ENCODE measurements at regions of chr4 and their contacts with region 1.

Region 1: DNA sequence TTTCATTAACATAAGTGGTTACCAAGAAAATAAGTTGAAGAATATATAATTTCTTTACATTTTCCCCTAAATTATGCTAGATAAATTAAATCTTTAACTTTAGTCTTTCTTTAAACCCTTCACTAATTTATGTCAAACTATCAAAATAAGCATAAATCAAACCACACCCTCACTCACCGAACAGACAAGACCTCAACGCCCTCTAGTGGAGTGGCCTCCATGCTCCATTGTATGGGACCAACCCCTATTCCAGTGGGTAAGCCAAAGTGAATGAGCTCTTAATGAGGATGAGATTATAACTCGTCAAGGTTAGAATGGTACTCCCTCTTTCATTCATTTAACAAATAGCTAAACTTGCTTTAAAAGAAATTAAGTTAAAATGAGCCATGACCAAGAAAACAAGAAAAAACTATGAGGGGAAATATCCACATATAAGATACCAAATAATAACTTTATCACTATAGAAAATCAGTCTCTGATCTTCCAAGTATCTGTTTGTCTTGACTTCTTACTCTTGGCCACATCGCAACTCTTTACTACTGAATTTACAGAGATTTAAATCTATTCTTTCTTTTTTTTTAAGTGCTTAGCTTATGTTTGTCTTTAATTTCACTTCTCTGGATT is 15.6 kb upstream of the BBS12 start:
- DNase-seq: peak; percentile 89
- ATAC-seq: peak; percentile 90
- H3K4me3 Mint-ChIP-seq: peak overlapping the region; percentile 26
- H3K27ac Mint-ChIP-seq: peak overlapping the region; percentile 72
- H3K4me1 Mint-ChIP-seq: peaks cover 43% of the 10 kb centered on the region
- H3K27me3 Mint-ChIP-seq: peaks cover 2% of the 10 kb centered on the region

Region 2: GRCh38 chr4:121950212-121950679 is 766.7 kb before region 1 on chr4:
- CTCF ChIA-PET with region 1: no interaction called
- POLR2A ChIA-PET with region 1: no interaction called
- intact Hi-C with region 1: loop called in 1 of 2 experiments (anchors 2 kb)
- DNase-seq: peak; percentile 94
- ATAC-seq: peak; percentile 87
- H3K4me3 Mint-ChIP-seq: peak overlapping the region; percentile 77
- H3K27ac Mint-ChIP-seq: no peak overlapping the region
- H3K4me1 Mint-ChIP-seq: peaks cover 4% of the 10 kb centered on the region
- H3K27me3 Mint-ChIP-seq: peaks cover 44% of the 10 kb centered on the region

Region 3: DNA sequence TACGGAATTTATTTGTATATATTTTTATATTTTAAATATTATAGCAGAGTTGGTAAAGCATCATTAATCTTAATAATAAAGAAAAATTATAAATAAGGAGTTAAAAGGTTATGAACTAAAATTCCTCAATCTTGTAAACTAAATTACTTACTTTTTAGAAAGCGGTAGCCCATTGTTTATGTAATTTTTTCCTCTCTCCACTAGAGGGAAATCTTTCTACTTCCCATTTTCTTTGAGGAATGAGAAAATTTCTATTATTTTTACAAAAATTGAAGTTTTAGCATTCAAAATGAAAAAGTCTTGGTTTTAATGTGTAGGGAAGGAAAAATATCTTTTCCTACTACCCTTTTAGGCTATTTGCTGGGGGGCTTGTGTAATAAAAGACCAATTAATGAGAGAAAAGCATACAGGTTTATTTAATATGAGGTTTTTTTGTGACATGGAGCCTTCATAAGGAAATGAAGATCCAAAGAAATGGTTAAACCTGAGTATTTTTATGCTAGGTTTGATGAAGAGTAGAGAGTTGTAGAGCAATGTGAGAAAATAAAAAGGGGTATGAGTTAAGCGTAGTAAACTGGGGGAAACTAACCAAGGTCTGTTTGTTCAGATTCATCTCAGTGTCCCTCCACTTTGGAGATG is 406.8 kb before region 1 on chr4:
- CTCF ChIA-PET with region 1: no interaction called
- POLR2A ChIA-PET with region 1: no interaction called
- intact Hi-C with region 1: loop called in 1 of 2 experiments (anchors 10 kb)
- DNase-seq: no peak
- ATAC-seq: no peak
- H3K4me3 Mint-ChIP-seq: no peak overlapping the region
- H3K27ac Mint-ChIP-seq: peak overlapping the region; percentile 51
- H3K4me1 Mint-ChIP-seq: peaks cover 2% of the 10 kb centered on the region
- H3K27me3 Mint-ChIP-seq: no peaks in the 10 kb centered on the region

Region 4: DNA sequence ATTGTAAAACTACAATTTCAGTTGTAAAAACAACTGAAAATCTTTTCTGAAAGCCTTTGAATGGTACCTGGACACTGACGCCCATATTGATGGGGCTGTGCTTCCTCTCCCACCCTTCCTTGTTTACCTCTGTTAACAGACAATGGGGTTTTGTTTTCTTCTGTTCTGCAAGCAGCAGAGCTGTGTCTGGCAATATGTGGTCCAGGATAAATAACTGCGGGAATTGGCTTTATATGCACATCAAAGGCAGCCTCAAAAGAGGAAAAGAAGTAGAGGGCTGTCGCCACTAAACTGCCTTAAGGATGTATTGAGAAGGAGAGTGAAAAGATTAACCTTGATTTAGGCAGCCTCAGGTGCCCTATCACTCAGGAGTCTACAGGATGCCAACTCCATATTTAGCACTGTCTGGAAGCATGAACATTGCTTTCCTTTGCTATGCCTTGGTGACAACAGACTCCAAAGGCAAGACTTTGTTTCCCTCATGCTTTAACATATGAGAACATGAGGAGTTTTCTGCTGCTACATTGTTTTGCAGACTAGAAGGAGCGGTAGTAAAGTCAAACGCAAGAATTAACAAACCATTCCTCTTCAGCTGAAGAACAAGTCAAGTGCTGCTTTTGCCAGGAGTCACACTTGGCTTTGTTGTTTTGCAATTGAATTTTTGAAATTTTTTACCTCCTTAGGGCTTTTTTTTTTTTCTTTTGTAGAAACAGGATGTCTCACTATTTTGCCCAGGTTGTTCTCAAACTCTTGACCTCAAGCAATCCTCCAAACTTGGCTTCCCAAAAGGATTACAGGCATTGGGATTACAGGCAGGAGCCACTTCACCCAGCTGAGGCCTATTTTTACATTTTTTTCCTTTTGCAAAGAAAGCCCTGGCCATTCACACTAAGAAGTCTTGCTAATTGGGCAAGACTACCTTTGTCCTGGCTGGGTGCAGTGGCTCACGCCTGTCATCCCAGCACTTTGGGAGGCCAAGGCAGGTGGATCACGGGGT is 99.0 kb before region 1 on chr4:
- CTCF ChIA-PET with region 1: interaction called, 13 read pairs
- POLR2A ChIA-PET with region 1: no interaction called
- intact Hi-C with region 1: loop called in 1 of 2 experiments (anchors 1 kb)
- DNase-seq: no peak
- ATAC-seq: no peak
- H3K4me3 Mint-ChIP-seq: peak overlapping the region; percentile 80
- H3K27ac Mint-ChIP-seq: peak overlapping the region; percentile 87
- H3K4me1 Mint-ChIP-seq: peaks cover 62% of the 10 kb centered on the region
- H3K27me3 Mint-ChIP-seq: no peaks in the 10 kb centered on the region

Region 5: GRCh38 chr4:122658818-122659295 is 58.1 kb before region 1 on chr4:
- CTCF ChIA-PET with region 1: interaction called, 12 read pairs
- POLR2A ChIA-PET with region 1: interaction called, 6 read pairs
- intact Hi-C with region 1: no loop called
- DNase-seq: no peak
- ATAC-seq: peak; percentile 86
- H3K4me3 Mint-ChIP-seq: peak overlapping the region; percentile 42
- H3K27ac Mint-ChIP-seq: peak overlapping the region; percentile 98
- H3K4me1 Mint-ChIP-seq: peaks cover 61% of the 10 kb centered on the region
- H3K27me3 Mint-ChIP-seq: no peaks in the 10 kb centered on the region

Region 6: DNA sequence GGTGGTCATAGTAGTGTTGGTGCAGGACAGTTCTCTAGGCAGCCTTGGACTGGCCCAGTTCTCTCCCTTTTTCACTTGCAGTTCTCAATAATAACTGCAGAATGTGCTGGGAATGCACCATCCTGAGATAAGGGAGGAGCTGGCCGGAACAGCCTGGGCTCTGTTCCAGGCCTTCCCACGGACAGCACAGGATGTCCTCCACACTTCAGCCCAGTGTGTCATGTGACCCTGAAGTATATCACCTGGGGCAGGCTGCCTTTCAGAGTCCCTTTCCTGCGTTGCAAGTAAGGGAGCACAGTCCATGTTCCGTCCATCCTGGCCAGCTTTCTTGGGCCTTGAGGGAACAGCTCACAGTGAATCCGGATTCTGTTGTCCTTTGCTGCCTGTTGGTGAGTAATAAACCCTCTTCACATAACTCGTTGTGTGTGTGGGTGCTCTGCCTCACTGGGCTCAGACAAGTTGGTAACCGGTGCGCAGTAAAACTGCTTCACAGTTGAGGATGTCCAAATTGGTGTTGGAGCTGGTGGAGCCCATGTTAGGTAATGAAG is 16.7 kb before region 1 on chr4:
- CTCF ChIA-PET with region 1: interaction called, 8 read pairs
- POLR2A ChIA-PET with region 1: interaction called, 3 read pairs
- intact Hi-C with region 1: loop called in 1 of 2 experiments (anchors 2 kb)
- DNase-seq: no peak
- ATAC-seq: peak; percentile 8
- H3K4me3 Mint-ChIP-seq: peak overlapping the region; percentile 71
- H3K27ac Mint-ChIP-seq: peak overlapping the region; percentile 93
- H3K4me1 Mint-ChIP-seq: peaks cover 59% of the 10 kb centered on the region
- H3K27me3 Mint-ChIP-seq: peaks cover 5% of the 10 kb centered on the region

Measured in activated CD4-positive, alpha-beta T cell treated with anti-CD3 and anti-CD28 coated beads for 36 hours (primary cell).